Ascending aorta (tissue), 2 donors: ENCODE measurements at regions of chr2 and their contacts with region 1.

Region 1: DNA sequence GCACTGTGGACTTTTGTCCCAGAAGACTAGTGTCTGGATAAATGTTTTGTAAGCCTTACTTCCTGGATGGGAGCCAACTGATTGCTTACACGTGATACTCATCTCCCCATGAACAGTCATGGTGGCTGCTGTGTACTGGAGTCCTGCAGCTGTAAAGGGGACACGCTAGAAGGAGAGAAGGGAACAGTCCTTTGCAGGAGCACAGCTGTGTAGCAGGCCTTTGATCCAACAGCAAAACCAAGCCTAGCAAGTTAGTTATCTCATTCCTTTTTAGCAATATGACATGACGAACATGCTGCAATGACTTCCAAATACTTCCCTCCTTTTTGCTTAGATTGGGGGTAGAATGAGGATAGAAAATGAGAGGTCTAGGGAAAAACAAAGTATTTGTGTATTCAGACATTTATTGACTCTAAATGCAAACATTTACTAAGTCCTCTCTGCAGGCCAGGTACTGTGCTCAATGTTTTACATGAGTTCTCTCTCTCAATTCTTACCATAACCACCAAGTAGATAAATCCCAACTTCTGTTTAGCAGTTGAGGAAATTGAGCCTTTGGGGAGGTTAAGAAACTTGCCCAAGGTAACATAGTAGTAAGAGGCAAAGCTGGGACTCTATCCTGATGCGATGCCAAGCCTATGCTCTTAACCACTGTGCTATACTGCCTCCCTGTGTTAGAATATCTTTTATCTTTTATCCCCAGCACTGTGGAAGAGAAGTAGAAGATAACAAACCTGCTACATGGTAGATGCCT is 55.4 kb upstream of the CD28 start:
- DNase-seq: no peak
- H3K4me3 ChIP-seq: no peak overlapping the region
- H3K27ac ChIP-seq: peak overlapping the region; percentile 56 to 70
- H3K4me1 ChIP-seq: peaks cover 7 to 16% of the 10 kb centered on the region in 2 donors
- H3K27me3 ChIP-seq: no peaks in the 10 kb centered on the region
- CTCF ChIP-seq: peak; percentile 17 to 46 (median 18)

Region 2: DNA sequence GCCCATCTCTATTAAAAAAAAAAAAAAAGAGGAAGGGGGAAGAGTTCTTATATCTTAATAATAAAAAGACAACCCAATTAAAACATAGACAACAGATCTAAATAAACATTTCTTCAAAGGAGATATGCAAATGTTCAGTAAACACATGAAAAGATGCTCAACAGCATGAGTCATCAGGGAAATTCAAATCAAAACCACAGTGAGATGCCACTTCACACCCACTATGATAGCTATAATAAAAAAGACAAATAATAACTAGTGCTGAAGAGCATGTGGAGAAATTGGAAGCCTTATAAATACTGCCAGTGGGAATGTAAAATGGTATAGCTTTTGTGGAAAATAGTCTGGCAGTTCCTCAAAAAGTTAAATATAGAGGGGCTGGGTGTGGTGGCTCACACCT is 473.7 kb before region 1 on chr2:
- intact Hi-C with region 1: no loop called
- DNase-seq: no peak
- H3K4me3 ChIP-seq: no peak overlapping the region
- H3K27ac ChIP-seq: no peak overlapping the region
- H3K4me1 ChIP-seq: peaks cover 0 to 6% of the 10 kb centered on the region in 2 donors
- H3K27me3 ChIP-seq: no peaks in the 10 kb centered on the region
- CTCF ChIP-seq: no peak

Region 3: DNA sequence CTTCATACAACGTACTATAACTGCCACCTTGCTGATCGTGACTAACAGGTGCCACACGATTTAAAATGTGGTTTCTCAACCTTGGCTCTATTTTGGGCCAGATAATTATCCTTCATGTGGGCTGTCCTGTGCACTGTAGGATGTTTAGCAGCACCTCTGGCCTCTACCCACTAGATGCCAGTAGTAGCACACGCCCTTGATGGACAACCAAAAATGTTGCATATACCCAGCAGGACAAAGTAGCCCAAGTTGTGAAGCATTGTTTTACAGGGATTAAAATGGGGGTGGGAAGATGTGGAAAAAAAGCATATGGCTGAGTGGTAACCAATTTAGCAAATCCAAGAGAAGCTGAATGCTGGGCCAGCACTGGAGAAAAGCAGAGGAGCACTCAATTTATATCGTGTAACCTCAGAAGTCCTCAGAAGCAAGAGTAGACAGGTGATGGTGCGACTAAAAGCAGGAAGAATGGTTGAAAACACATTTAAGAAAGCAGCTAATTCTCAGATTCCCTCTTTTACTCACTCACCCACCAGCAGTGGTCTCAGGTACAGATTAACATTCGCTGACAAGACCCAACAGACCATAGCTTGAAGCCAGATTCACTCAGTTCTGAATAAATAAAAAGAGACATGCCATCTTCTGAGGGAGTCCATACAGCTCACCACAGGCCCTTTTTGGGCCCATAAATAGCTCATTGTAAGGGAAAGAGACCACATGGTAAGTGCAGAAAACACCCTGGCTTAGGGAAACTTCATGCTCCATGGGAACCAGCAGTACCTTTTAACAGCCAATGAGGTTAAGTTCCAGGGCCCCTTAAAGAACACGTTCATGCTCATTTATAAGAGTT is 166.5 kb before region 1 on chr2:
- intact Hi-C with region 1: loop called (anchors 2 kb)
- DNase-seq: no peak
- H3K4me3 ChIP-seq: no peak overlapping the region
- H3K27ac ChIP-seq: no peak overlapping the region
- H3K4me1 ChIP-seq: no peaks in the 10 kb centered on the region
- H3K27me3 ChIP-seq: no peaks in the 10 kb centered on the region
- CTCF ChIP-seq: peak; percentile 63 to 73 (median 64)

Region 4: DNA sequence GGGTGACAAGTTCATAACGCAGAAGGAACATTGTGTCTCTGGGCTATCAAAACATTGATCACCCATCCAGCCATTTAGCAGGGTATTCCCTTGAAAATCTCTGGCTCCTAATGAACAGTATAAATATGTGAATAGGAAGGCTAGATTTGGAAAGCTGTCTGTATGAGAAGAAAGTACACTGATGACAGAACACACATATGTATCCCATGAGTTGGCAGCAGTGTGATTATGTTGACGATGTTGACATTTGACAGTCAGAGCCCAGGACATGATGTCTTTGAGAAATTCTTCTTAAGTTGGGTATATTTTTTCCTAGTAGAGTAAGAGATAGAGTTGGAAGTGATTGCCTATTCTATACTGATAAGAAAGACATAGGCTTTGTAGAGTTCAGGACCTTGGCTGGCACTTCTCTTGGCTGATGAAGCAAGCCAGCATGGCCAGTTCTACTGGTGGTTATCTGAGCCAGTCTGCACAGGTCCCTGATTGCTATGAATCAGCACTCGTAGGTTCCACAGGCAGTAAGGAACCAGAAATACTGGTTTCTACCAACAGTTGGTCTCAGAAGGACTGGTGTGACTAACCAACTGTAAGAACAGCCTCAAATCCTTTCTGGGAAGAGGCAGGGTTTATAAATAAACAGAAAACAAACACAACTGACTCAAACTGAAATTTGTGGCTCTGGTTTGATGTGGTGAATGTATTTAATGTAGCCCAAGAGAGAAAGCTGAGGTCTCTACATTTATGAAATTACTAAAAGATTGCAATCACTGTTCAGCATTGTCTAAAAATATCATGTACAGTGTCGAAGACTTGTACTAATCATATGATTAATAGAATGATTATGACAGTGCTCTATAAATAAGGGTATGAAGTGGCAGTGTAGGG is 72.0 kb before region 1 on chr2:
- intact Hi-C with region 1: loop called (anchors 5 kb)
- DNase-seq: peak in 1 of 2 donors; percentile 76
- H3K4me3 ChIP-seq: no peak overlapping the region
- H3K27ac ChIP-seq: peak overlapping the region; percentile 56 to 76
- H3K4me1 ChIP-seq: peaks cover 3 to 21% of the 10 kb centered on the region in 2 donors
- H3K27me3 ChIP-seq: no peaks in the 10 kb centered on the region
- CTCF ChIP-seq: no peak

Region 5: DNA sequence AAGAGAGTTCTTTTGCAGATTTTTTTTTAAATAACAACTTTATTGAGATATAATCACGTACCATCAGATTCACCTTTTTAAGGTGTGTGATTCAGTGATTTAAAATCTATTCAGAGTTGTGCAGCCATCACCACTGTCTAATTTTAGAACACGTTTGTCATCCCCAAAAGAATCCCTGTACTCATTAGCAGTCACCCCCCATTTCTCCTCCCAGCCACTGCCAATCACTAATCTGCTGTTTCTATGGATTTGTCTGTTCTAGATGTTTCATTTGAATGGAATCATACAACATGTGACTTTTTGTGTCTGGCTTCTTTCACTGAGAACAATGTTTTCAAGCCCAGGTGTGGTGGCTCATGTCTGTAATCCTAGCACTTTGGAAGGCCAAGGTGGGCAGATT is 60.5 kb before region 1 on chr2:
- intact Hi-C with region 1: no loop called
- DNase-seq: no peak
- H3K4me3 ChIP-seq: no peak overlapping the region
- H3K27ac ChIP-seq: peak overlapping the region in 1 of 2 donors; percentile 59
- H3K4me1 ChIP-seq: peaks cover 5 to 6% of the 10 kb centered on the region in 2 donors
- H3K27me3 ChIP-seq: no peaks in the 10 kb centered on the region
- CTCF ChIP-seq: no peak